Gastrocnemius medialis (tissue), 4 donors: ENCODE measurements at regions of chrX and their contacts with region 1.

Region 1: GRCh38 chrX:77785486-77786364 is at the start of gene ATRX:
- DNase-seq: peak; percentile 52 to 66
- ATAC-seq: peak; percentile 96 to 98
- H3K4me3 ChIP-seq: peak within 1 kb of the TSS; percentile 59 to 86 (median 76)
- H3K27ac ChIP-seq: peak within 1 kb of the TSS; percentile 87 to 94 (median 94)
- H3K4me1 ChIP-seq: peaks cover 3 to 12% of the 10 kb centered on the region in 2 donors
- H3K27me3 ChIP-seq: no peaks in the 10 kb centered on the region
- CTCF ChIP-seq: no peak
- POLR2A ChIP-seq: peak; percentile 17 to 39
- total RNA-seq, gene ATRX: 34.7 to 75.9 (median 50.5) TPM

Region 2: DNA sequence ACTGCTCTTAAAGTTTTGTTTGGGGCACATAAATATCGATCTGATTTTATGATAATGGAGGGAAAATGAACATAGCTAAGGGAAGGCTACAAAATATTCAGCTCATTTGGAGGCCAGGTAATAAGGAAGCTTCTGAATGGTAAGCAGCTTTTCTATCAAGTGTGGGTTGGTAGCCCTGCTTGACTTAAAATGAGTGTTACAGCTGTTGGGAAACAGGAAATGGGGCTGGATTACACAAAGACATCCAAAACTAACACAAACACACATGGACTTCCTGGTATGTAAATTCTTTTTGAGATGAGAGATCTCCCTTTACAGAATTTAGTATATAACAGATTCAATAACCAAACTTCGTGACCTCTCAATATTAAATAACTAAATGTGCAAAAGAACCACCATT is 280.5 kb before region 1 on chrX:
- in situ Hi-C with region 1: no loop called
- intact Hi-C with region 1: loop called (anchors 10 kb)
- DNase-seq: no peak
- ATAC-seq: no peak
- H3K4me3 ChIP-seq: no peak overlapping the region
- H3K27ac ChIP-seq: no peak overlapping the region
- H3K4me1 ChIP-seq: no peaks in the 10 kb centered on the region
- H3K27me3 ChIP-seq: no peaks in the 10 kb centered on the region
- CTCF ChIP-seq: no peak
- POLR2A ChIP-seq: no peak

Region 3: GRCh38 chrX:77519765-77520164 is 266.0 kb before region 1 on chrX:
- in situ Hi-C with region 1: no loop called
- intact Hi-C with region 1: no loop called
- DNase-seq: no peak
- ATAC-seq: no peak
- H3K4me3 ChIP-seq: no peak overlapping the region
- H3K27ac ChIP-seq: no peak overlapping the region
- H3K4me1 ChIP-seq: no peaks in the 10 kb centered on the region
- H3K27me3 ChIP-seq: no peaks in the 10 kb centered on the region
- CTCF ChIP-seq: no peak
- POLR2A ChIP-seq: no peak

Region 4: GRCh38 chrX:77668391-77669237 is 117.1 kb before region 1 on chrX:
- in situ Hi-C with region 1: no loop called
- intact Hi-C with region 1: loop called (anchors 10 kb)
- DNase-seq: no peak
- ATAC-seq: no peak
- H3K4me3 ChIP-seq: no peak overlapping the region
- H3K27ac ChIP-seq: peak overlapping the region; percentile 5 to 55 (median 49)
- H3K4me1 ChIP-seq: no peaks in the 10 kb centered on the region
- H3K27me3 ChIP-seq: no peaks in the 10 kb centered on the region
- CTCF ChIP-seq: no peak
- POLR2A ChIP-seq: no peak

Region 5: GRCh38 chrX:77899081-77899828 is 113.5 kb after region 1 on chrX and contains the start of gene COX7B:
- in situ Hi-C with region 1: loop called in 1 of 4 experiments (anchors 10 kb)
- intact Hi-C with region 1: loop called (anchors 5 kb)
- DNase-seq: peak; percentile 56 to 77
- ATAC-seq: peak; percentile 83 to 85
- H3K4me3 ChIP-seq: peak within 1 kb of the TSS; percentile 48 to 77 (median 60)
- H3K27ac ChIP-seq: peak within 1 kb of the TSS; percentile 79 to 90 (median 88)
- H3K4me1 ChIP-seq: peaks cover 2 to 21% of the 10 kb centered on the region in 2 donors
- H3K27me3 ChIP-seq: no peaks in the 10 kb centered on the region
- CTCF ChIP-seq: peak in 2 of 5 experiments; percentile 20 to 30
- POLR2A ChIP-seq: peak; percentile 78 to 80
- total RNA-seq, gene COX7B: 788 to 912 (median 821) TPM